Naive thymus-derived CD4-positive, alpha-beta T cell (primary cell): ENCODE measurements at regions of chr6 and their contacts with region 1.

Region 1: GRCh38 chr6:53484476-53485280 is 60.2 kb downstream of the GCLC start:
- DNase-seq: peak; percentile 28 to 74 (median 60)
- ATAC-seq: peak; percentile 86
- H3K4me3 ChIP-seq: no peak overlapping the region
- H3K4me3 Mint-ChIP-seq: no peak overlapping the region
- H3K27ac ChIP-seq: no peak overlapping the region
- H3K27ac Mint-ChIP-seq: no peak overlapping the region
- H3K4me1 ChIP-seq: no peaks in the 10 kb centered on the region
- H3K4me1 Mint-ChIP-seq: peaks cover 0 to 19% (median 0%) of the 10 kb centered on the region in 7 donors
- H3K27me3 ChIP-seq: no peaks in the 10 kb centered on the region
- H3K27me3 Mint-ChIP-seq: peaks cover 20 to 34% (median 25%) of the 10 kb centered on the region in 5 donors

Region 2: DNA sequence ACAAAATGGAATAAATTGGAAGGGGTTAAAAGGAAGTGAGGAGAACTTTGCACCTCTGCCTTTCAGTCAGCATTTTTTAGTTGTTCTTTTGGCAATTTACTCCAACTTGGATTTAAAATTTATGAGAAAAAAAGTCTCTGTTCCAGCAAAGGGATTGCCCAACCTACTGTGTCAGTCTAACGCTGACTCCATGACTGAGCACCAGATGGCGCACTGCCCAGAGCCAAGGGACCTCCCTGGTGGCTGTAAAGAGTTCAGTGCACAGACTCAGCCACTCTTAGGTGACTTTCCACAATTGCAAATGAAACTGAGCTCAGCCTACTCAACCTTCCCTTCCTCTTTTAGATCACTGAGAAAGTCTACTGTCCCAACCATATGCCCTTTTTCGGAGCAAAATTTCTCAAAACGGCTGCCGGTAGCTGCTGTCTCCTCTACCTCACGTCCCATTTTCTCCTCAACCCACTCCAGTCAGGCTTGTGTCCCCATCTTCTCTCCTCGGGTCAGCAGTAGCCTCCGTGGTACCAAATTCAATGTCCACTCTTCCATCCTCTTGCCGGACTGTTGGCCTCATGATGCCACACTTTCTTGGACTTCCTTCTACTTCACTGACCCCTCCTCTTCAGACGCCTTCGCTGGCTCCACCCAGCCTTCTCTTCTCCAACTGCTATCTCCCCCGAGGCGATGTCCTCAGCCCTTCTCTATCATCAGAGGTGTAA is 760.1 kb before region 1 on chr6:
- CTCF ChIA-PET with region 1: no interaction called
- POLR2A ChIA-PET with region 1: no interaction called
- intact Hi-C with region 1: loop called in 1 of 2 experiments (anchors 1 kb)
- DNase-seq: peak in 7 of 9 donors; percentile 14 to 48 (median 25)
- ATAC-seq: peak; percentile 87
- H3K4me3 ChIP-seq: no peak overlapping the region
- H3K4me3 Mint-ChIP-seq: no peak overlapping the region
- H3K27ac ChIP-seq: no peak overlapping the region
- H3K27ac Mint-ChIP-seq: peak overlapping the region in 1 of 9 donors; percentile 16
- H3K4me1 ChIP-seq: no peaks in the 10 kb centered on the region
- H3K4me1 Mint-ChIP-seq: peaks cover 0 to 7% (median 0%) of the 10 kb centered on the region in 7 donors
- H3K27me3 ChIP-seq: no peaks in the 10 kb centered on the region
- H3K27me3 Mint-ChIP-seq: peaks cover 0 to 16% (median 0%) of the 10 kb centered on the region in 5 donors

Region 3: GRCh38 chr6:52839119-52840055 is 645.3 kb before region 1 on chr6:
- CTCF ChIA-PET with region 1: no interaction called
- POLR2A ChIA-PET with region 1: no interaction called
- intact Hi-C with region 1: loop called (anchors 1 to 2 kb)
- DNase-seq: peak in 8 of 9 donors; percentile 8 to 53 (median 38)
- ATAC-seq: peak; percentile 87
- H3K4me3 ChIP-seq: no peak overlapping the region
- H3K4me3 Mint-ChIP-seq: no peak overlapping the region
- H3K27ac ChIP-seq: no peak overlapping the region
- H3K27ac Mint-ChIP-seq: no peak overlapping the region
- H3K4me1 ChIP-seq: no peaks in the 10 kb centered on the region
- H3K4me1 Mint-ChIP-seq: peaks cover 0 to 6% (median 0%) of the 10 kb centered on the region in 7 donors
- H3K27me3 ChIP-seq: no peaks in the 10 kb centered on the region
- H3K27me3 Mint-ChIP-seq: peaks cover 36 to 49% (median 39%) of the 10 kb centered on the region in 5 donors

Region 4: GRCh38 chr6:53064726-53065215 is 419.9 kb before region 1 on chr6:
- CTCF ChIA-PET with region 1: no interaction called
- POLR2A ChIA-PET with region 1: no interaction called
- intact Hi-C with region 1: loop called in 1 of 2 experiments (anchors 2 kb)
- DNase-seq: peak; percentile 81 to 98 (median 94)
- ATAC-seq: peak; percentile 91
- H3K4me3 ChIP-seq: peak overlapping the region; percentile 95
- H3K4me3 Mint-ChIP-seq: peak overlapping the region; percentile 86 to 100 (median 99)
- H3K27ac ChIP-seq: peak overlapping the region; percentile 78
- H3K27ac Mint-ChIP-seq: peak overlapping the region; percentile 90 to 99 (median 97)
- H3K4me1 ChIP-seq: peaks cover 22% of the 10 kb centered on the region in 2 donors
- H3K4me1 Mint-ChIP-seq: peaks cover 36 to 68% (median 56%) of the 10 kb centered on the region in 7 donors
- H3K27me3 ChIP-seq: no peaks in the 10 kb centered on the region
- H3K27me3 Mint-ChIP-seq: no peaks in the 10 kb centered on the region

Region 5: DNA sequence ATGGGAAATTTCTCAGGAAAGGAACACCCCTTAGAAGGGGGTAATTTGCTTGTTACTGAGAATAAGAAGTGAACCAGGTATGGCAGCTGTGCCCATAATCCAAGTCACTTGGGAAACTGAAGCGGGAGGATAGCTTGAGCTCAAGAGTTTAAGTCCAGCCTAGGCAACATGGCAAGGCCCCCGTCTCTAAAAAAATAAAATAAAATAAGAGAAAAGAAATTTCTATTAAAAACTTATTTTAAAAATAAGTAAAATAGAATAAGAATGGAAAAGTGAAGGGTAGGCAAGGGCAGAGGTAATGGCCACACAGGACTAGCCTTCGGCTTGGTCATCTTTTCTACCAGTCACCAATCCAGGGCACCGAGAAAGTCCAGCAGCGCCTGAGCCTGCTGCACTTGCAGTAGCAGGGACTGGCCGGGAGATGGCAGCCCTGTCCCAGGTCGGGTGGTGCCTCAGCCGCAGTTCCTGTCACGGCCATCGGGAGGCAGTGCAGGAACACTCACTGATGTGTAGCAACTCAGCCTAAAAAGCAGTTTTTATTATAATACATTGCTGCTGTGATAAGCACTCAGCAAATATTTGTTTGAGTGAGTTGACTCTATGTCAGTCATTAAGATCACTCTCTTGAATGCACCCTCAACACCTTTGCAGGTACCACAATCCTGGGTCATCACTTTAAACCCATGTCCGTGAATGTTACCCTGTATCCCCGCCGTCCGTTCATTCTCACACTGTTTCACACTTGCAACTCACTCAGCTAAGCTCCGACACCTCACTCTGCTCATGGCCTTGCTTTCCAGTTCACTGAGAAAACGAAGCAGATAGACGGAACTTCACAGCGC is 312.9 kb before region 1 on chr6:
- CTCF ChIA-PET with region 1: interaction called, 35 read pairs
- POLR2A ChIA-PET with region 1: interaction called, 3 read pairs
- intact Hi-C with region 1: loop called (anchors 1 kb)
- DNase-seq: peak; percentile 76 to 95 (median 87)
- ATAC-seq: peak; percentile 100
- H3K4me3 ChIP-seq: no peak overlapping the region
- H3K4me3 Mint-ChIP-seq: no peak overlapping the region
- H3K27ac ChIP-seq: no peak overlapping the region
- H3K27ac Mint-ChIP-seq: no peak overlapping the region
- H3K4me1 ChIP-seq: no peaks in the 10 kb centered on the region
- H3K4me1 Mint-ChIP-seq: peaks cover 0 to 6% (median 0%) of the 10 kb centered on the region in 7 donors
- H3K27me3 ChIP-seq: no peaks in the 10 kb centered on the region
- H3K27me3 Mint-ChIP-seq: peaks cover 0 to 3% (median 0%) of the 10 kb centered on the region in 5 donors

Region 6: GRCh38 chr6:53199156-53199555 is 285.5 kb before region 1 on chr6:
- CTCF ChIA-PET with region 1: no interaction called
- POLR2A ChIA-PET with region 1: no interaction called
- intact Hi-C with region 1: no loop called
- DNase-seq: no peak
- ATAC-seq: peak; percentile 66
- H3K4me3 ChIP-seq: no peak overlapping the region
- H3K4me3 Mint-ChIP-seq: no peak overlapping the region
- H3K27ac ChIP-seq: no peak overlapping the region
- H3K27ac Mint-ChIP-seq: no peak overlapping the region
- H3K4me1 ChIP-seq: no peaks in the 10 kb centered on the region
- H3K4me1 Mint-ChIP-seq: peaks cover 0 to 8% (median 5%) of the 10 kb centered on the region in 7 donors
- H3K27me3 ChIP-seq: no peaks in the 10 kb centered on the region
- H3K27me3 Mint-ChIP-seq: no peaks in the 10 kb centered on the region

Region 7: DNA sequence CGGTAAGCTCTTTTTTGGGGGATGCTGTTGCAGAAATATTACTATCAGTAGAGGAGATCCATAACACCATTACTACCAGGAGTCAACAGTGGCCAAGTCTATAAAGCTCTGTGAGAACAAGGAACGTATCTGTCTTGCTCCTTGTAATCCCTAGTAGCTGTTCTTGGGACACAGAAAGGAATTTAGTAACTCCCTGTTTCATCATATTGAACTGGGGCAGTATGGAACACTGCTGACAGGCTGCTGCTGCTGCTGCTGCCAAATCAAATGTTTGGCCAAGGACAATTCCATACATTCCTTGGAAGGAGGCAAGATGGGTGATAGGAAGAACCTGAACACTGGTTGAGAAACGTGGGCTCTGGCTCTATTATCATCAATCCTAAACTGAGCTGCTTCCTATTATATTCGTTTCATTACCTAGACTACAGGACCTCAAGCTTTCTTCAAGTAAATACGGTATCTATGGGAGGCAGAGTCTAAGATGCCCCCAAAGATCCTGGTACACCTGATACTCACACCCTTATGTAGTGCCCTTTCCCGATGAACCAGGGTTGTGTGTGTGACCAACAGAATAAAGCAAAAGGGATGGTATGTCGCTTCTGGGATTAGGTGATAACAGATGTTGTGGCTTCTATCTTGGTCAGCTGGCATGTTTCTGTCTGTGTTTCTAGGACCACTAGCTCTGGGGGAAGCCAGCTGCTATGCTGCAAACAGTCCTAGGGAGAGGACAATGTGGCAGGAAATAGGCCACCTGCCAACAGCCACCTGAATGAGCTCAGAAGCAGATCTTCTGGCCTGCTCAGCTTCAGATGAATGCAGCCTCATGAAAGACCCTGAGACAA is 175.4 kb before region 1 on chr6:
- CTCF ChIA-PET with region 1: no interaction called
- POLR2A ChIA-PET with region 1: no interaction called
- intact Hi-C with region 1: loop called in 1 of 2 experiments (anchors 10 kb)
- DNase-seq: peak in 1 of 9 donors; percentile 23
- ATAC-seq: peak; percentile 56
- H3K4me3 ChIP-seq: no peak overlapping the region
- H3K4me3 Mint-ChIP-seq: peak overlapping the region in 6 of 10 donors; percentile 3 to 46 (median 18)
- H3K27ac ChIP-seq: no peak overlapping the region
- H3K27ac Mint-ChIP-seq: peak overlapping the region in 8 of 9 donors; percentile 45 to 76 (median 62)
- H3K4me1 ChIP-seq: peaks cover 40 to 77% of the 10 kb centered on the region in 2 donors
- H3K4me1 Mint-ChIP-seq: peaks cover 49 to 85% (median 80%) of the 10 kb centered on the region in 7 donors
- H3K27me3 ChIP-seq: no peaks in the 10 kb centered on the region
- H3K27me3 Mint-ChIP-seq: no peaks in the 10 kb centered on the region

Region 8: DNA sequence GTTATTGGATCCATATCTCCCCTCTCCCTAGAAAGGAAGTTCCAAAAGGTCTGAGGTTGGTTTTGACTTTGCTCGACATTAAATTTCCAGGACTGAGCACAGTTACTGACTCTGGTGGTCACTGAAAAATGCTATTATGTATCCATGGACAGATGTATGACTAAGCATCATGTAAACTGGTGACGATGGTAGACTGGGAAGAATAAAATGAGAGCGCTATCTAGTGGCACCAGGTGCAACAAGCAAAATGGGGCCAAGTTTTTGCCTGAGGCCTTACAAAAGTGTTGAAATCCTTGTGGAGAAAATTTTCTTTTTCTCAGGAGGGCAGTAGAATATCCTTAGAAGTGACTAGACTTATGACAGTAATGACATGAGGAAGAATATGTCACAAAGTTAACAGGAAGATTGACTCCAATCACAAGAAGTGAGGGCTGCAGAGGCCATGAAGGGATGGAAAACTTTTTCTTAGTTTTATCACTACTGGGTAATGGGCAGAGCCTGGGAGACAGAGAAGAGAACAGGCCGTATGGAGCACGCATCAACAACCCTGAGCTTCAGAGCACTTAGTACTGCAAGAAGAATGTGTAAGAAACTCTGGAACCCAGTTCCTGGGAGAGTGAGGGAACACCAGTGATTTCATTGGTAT is 47.0 kb before region 1 on chr6:
- CTCF ChIA-PET with region 1: no interaction called
- POLR2A ChIA-PET with region 1: no interaction called
- intact Hi-C with region 1: loop called in 1 of 2 experiments (anchors 1 kb)
- DNase-seq: peak in 5 of 9 donors; percentile 11 to 34 (median 31)
- ATAC-seq: peak; percentile 78
- H3K4me3 ChIP-seq: no peak overlapping the region
- H3K4me3 Mint-ChIP-seq: no peak overlapping the region
- H3K27ac ChIP-seq: no peak overlapping the region
- H3K27ac Mint-ChIP-seq: no peak overlapping the region
- H3K4me1 ChIP-seq: no peaks in the 10 kb centered on the region
- H3K4me1 Mint-ChIP-seq: peaks cover 0 to 6% (median 0%) of the 10 kb centered on the region in 7 donors
- H3K27me3 ChIP-seq: no peaks in the 10 kb centered on the region
- H3K27me3 Mint-ChIP-seq: peaks cover 0 to 9% (median 3%) of the 10 kb centered on the region in 5 donors